GM12878 (cell line): ENCODE measurements at regions of chr9 and their contacts with region 1.

Region 1: DNA sequence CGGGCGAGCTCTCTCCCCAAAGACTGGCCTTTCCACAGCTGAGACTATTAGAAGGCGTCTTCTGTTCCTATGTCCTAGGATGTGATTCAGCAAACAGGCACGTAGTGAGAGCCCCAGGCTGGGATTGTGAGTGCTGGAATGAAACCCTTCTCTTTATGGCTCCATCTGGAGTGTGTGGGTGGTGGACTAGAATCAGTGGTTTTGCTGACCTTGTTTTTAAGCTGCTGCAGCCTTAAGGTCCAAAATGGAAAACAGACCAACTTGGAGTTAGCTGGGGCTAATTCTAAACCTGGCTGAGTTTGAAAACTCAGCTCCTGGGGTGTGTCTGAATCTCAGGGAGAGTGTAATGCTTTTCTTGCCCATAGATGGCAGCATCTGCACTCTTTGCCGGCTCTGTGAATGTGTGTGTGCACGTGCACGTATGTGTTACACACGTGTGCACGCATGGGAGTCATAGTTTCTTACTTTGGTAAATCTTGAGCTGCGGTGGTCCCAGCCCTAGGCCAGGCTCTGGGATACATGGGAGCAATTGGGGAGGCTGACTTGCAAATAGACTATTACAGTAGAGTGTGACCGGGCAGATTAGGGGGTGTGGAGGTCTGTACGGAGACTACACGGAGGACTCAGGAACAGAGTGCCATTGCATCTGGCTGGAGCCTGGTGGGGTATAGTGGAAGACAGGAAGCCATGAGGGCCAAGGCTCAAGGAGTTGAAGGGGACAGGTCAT is 10.7 kb downstream of the GSN start:
- DNase-seq: peak; percentile 11
- ATAC-seq: peak; percentile 95
- H3K4me3 ChIP-seq: no peak overlapping the region
- H3K27ac ChIP-seq: no peak overlapping the region
- H3K4me1 ChIP-seq: peaks cover 5% of the 10 kb centered on the region; the same call in 1 of the 2 replicates
- H3K27me3 ChIP-seq: no peaks in the 10 kb centered on the region
- CTCF ChIP-seq: peak; percentile 60 to 79 (median 62)
- EP300 ChIP-seq: no peak
- POLR2A ChIP-seq: no peak
- RAD21 ChIP-seq: peak; percentile 48

Region 2: GRCh38 chr9:121009650-121010049 is 269.0 kb before region 1 on chr9:
- CTCF ChIA-PET with region 1: no interaction called
- POLR2A ChIA-PET with region 1: no interaction called
- RAD21 ChIA-PET with region 1: no interaction called
- SMC1A ChIA-PET with region 1: no interaction called
- in situ Hi-C with region 1: no loop called
- intact Hi-C with region 1: no loop called
- DNase-seq: no peak
- ATAC-seq: peak; percentile 42; the same call in 2 of the 3 replicates
- H3K4me3 ChIP-seq: no peak overlapping the region
- H3K27ac ChIP-seq: no peak overlapping the region
- H3K4me1 ChIP-seq: peaks cover 4% of the 10 kb centered on the region
- H3K27me3 ChIP-seq: no peaks in the 10 kb centered on the region
- CTCF ChIP-seq: no peak
- EP300 ChIP-seq: no peak
- POLR2A ChIP-seq: no peak
- RAD21 ChIP-seq: no peak

Region 3: GRCh38 chr9:121150188-121150587 is 128.5 kb before region 1 on chr9:
- CTCF ChIA-PET with region 1: no interaction called
- POLR2A ChIA-PET with region 1: no interaction called
- RAD21 ChIA-PET with region 1: no interaction called
- SMC1A ChIA-PET with region 1: no interaction called
- in situ Hi-C with region 1: no loop called
- intact Hi-C with region 1: no loop called
- DNase-seq: no peak
- ATAC-seq: no peak
- H3K4me3 ChIP-seq: no peak overlapping the region
- H3K27ac ChIP-seq: no peak overlapping the region
- H3K4me1 ChIP-seq: no peaks in the 10 kb centered on the region; the same call in none of the 2 replicates
- H3K27me3 ChIP-seq: no peaks in the 10 kb centered on the region
- CTCF ChIP-seq: no peak
- EP300 ChIP-seq: no peak
- POLR2A ChIP-seq: no peak
- RAD21 ChIP-seq: no peak

Region 4: DNA sequence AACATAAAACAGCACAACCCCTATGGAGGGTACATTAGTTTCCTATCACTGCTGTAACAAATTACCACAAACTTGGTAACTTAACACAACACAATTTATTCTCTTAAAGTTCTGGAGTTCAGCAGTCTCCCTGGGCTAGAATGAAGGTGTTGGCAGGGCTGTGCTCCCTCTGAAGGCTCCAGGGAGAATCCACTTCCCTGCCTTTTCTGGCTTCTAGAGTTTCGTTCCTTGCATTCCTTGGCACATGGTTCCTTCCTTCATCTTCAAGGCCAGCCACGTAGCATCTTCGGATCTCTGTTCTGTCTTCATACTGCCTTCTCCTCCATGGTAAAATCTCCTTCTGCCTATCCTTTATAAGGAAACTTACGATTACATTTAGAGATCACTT is 35.7 kb before region 1 on chr9:
- CTCF ChIA-PET with region 1: interaction called, 10 read pairs
- POLR2A ChIA-PET with region 1: no interaction called
- RAD21 ChIA-PET with region 1: no interaction called
- SMC1A ChIA-PET with region 1: interaction called, 4 read pairs
- in situ Hi-C with region 1: no loop called
- intact Hi-C with region 1: no loop called
- DNase-seq: no peak
- ATAC-seq: no peak
- H3K4me3 ChIP-seq: no peak overlapping the region
- H3K27ac ChIP-seq: no peak overlapping the region
- H3K4me1 ChIP-seq: no peaks in the 10 kb centered on the region
- H3K27me3 ChIP-seq: no peaks in the 10 kb centered on the region
- CTCF ChIP-seq: no peak
- EP300 ChIP-seq: no peak
- POLR2A ChIP-seq: no peak
- RAD21 ChIP-seq: no peak

Region 5: DNA sequence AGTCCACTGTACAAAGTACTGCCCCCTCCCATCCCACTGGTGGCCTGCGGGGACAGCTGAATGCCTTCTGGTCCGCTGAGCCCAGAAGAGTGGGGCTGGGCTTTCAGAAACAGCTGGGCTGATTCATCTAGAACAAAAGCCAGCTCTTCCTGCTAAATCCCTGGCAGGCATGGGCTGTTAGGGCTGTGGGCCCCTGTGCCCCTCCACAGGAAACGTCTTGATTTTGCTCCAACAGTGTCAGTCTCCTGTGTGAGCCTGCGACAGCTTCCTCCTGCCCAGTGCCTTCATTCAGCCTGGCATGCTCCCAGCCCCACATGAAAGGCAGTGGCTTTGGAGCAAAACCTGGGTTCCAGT is 17.6 kb before region 1 on chr9:
- CTCF ChIA-PET with region 1: interaction called, 19 read pairs
- POLR2A ChIA-PET with region 1: no interaction called
- RAD21 ChIA-PET with region 1: interaction called, 3 read pairs
- SMC1A ChIA-PET with region 1: interaction called, 4 read pairs
- in situ Hi-C with region 1: no loop called
- intact Hi-C with region 1: no loop called
- DNase-seq: no peak
- ATAC-seq: no peak
- H3K4me3 ChIP-seq: no peak overlapping the region
- H3K27ac ChIP-seq: no peak overlapping the region
- H3K4me1 ChIP-seq: no peaks in the 10 kb centered on the region
- H3K27me3 ChIP-seq: no peaks in the 10 kb centered on the region
- CTCF ChIP-seq: no peak
- EP300 ChIP-seq: no peak
- POLR2A ChIP-seq: no peak
- RAD21 ChIP-seq: no peak

Region 6: DNA sequence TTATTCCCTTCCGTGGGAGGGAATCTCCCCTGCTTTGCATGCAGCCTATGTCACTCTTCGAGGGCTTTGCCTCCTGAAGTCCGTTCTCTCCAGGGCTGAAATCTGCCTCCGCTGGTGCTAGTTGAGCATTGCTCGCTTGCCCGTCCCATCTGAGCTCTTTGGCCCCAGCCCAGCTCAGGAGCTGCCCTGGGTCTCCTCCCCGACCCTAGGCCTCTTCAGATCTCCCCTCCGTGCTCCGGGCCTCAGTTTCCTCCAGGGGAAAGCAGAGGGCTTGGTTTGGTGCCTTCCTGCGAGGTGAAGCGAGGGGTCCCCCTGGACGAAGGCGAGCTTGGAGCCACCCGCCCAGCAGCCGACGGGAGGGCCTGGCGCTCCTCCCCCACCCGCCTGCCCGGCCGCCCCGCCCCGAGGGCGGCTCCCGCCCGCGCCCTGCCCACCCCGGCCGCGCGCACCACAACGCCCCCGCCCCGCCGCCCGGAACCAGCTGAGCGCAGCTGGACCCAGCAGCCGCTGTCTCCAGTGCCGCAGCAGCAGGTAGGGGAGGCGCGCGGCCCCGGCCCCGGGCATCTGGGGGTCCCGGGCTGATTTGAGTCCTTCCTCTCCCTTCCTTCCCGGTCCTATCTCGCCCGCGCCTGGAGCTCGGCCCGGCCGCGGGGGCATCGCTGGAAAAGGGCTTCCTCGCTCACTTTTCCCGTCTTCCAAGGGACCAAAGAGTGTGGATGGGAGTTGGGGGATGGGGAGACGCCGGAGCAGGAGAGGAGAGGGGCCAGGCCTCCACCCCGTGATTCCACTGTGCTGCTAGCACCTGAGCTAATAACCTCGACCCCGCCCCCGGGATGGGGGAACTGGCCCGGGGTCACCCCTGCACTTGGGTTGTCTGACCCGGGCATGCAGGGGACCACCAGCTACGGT is 10.8 kb before region 1 on chr9 and contains the start of gene GSN:
- CTCF ChIA-PET with region 1: interaction called, 33 read pairs
- POLR2A ChIA-PET with region 1: interaction called, 3 read pairs
- RAD21 ChIA-PET with region 1: interaction called, 3 read pairs
- SMC1A ChIA-PET with region 1: interaction called, 4 read pairs
- in situ Hi-C with region 1: no loop called
- intact Hi-C with region 1: no loop called
- DNase-seq: no peak
- ATAC-seq: peak; percentile 94
- H3K4me3 ChIP-seq: peak within 1 kb of the TSS; percentile 87
- H3K27ac ChIP-seq: no peak within 1 kb of the TSS
- H3K4me1 ChIP-seq: peaks cover 16% of the 10 kb centered on the region
- H3K27me3 ChIP-seq: no peaks in the 10 kb centered on the region
- CTCF ChIP-seq: no peak
- EP300 ChIP-seq: no peak
- POLR2A ChIP-seq: peak; percentile 52; the same call in 1 of the 2 replicates
- RAD21 ChIP-seq: no peak
- polyA plus RNA-seq, gene GSN: 0.66 to 0.84 TPM

Region 7: GRCh38 chr9:121399883-121400607 is 121.3 kb after region 1 on chr9:
- CTCF ChIA-PET with region 1: interaction called, 10 read pairs
- POLR2A ChIA-PET with region 1: no interaction called
- RAD21 ChIA-PET with region 1: no interaction called
- SMC1A ChIA-PET with region 1: interaction called, 8 read pairs
- in situ Hi-C with region 1: no loop called
- intact Hi-C with region 1: no loop called
- DNase-seq: peak; percentile 26
- ATAC-seq: peak; percentile 80
- H3K4me3 ChIP-seq: no peak overlapping the region
- H3K27ac ChIP-seq: no peak overlapping the region
- H3K4me1 ChIP-seq: no peaks in the 10 kb centered on the region
- H3K27me3 ChIP-seq: no peaks in the 10 kb centered on the region
- CTCF ChIP-seq: peak; percentile 33 to 68 (median 46); a peak in 5 of 6 replicates
- EP300 ChIP-seq: no peak
- POLR2A ChIP-seq: no peak
- RAD21 ChIP-seq: peak; percentile 79